Activated CD4-positive, alpha-beta T cell treated with anti-CD3 and anti-CD28 coated beads for 36 hours (primary cell): ENCODE measurements at regions of chr2 and their contacts with region 1.

Region 1: DNA sequence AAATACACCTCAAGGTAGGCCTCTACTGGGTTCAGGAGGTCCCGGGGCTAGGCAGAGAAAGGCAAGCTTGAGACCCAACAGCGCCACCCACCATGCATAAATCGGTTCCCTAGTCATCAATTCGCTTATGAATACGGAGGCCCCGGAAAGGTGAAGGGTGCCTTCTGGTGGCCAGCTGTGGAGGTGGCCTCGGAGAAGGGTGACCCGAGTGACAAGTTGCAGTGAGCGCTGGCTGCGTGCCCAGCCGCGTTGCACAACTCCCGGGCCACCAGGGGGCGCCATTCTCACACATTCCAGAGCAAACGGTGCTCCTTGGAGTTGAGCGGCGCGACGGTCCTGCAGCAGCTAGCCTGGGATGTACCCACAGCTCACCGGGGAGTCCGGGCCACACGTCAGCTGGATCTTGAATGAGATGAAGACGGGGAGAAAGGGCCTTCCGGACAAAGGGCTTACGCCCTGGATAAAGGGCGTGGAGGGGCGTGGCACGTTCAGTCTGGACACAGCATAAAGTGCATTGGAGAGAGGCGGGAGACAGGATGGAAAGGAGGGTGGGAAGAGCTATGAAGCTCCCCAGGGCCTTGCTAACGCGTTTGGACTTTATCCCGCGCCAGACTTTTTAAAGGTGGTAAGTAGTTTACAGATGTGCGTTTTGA is 20.4 kb downstream of the TMSB10 start:
- DNase-seq: peak; percentile 100
- ATAC-seq: peak; percentile 83
- H3K4me3 Mint-ChIP-seq: peak overlapping the region; percentile 87
- H3K27ac Mint-ChIP-seq: peak overlapping the region; percentile 92
- H3K4me1 Mint-ChIP-seq: peaks cover 35% of the 10 kb centered on the region
- H3K27me3 Mint-ChIP-seq: no peaks in the 10 kb centered on the region

Region 2: GRCh38 chr2:84459018-84459943 is 466.6 kb before region 1 on chr2 and contains the start of gene SUCLG1:
- CTCF ChIA-PET with region 1: interaction called, 4 read pairs
- POLR2A ChIA-PET with region 1: no interaction called
- intact Hi-C with region 1: loop called in 1 of 2 experiments (anchors 2 kb)
- DNase-seq: peak; percentile 92
- ATAC-seq: peak; percentile 93
- H3K4me3 Mint-ChIP-seq: peak within 1 kb of the TSS; percentile 94
- H3K27ac Mint-ChIP-seq: peak within 1 kb of the TSS; percentile 98
- H3K4me1 Mint-ChIP-seq: peaks cover 34% of the 10 kb centered on the region
- H3K27me3 Mint-ChIP-seq: no peaks in the 10 kb centered on the region
- total RNA-seq, gene SUCLG1: 60.7 to 68.9 TPM

Region 3: GRCh38 chr2:84741296-84741765 is 184.5 kb before region 1 on chr2:
- CTCF ChIA-PET with region 1: interaction called, 9 read pairs
- POLR2A ChIA-PET with region 1: no interaction called
- intact Hi-C with region 1: loop called in 1 of 2 experiments (anchors 5 kb)
- DNase-seq: peak; percentile 70
- ATAC-seq: peak; percentile 100
- H3K4me3 Mint-ChIP-seq: no peak overlapping the region
- H3K27ac Mint-ChIP-seq: no peak overlapping the region
- H3K4me1 Mint-ChIP-seq: peaks cover 11% of the 10 kb centered on the region
- H3K27me3 Mint-ChIP-seq: no peaks in the 10 kb centered on the region

Region 4: GRCh38 chr2:84888401-84889276 is 37.2 kb before region 1 on chr2:
- CTCF ChIA-PET with region 1: interaction called, 45 read pairs
- POLR2A ChIA-PET with region 1: interaction called, 3 read pairs
- intact Hi-C with region 1: no loop called
- DNase-seq: peak; percentile 71
- ATAC-seq: peak; percentile 87
- H3K4me3 Mint-ChIP-seq: peak overlapping the region; percentile 67
- H3K27ac Mint-ChIP-seq: peak overlapping the region; percentile 96
- H3K4me1 Mint-ChIP-seq: peaks cover 58% of the 10 kb centered on the region
- H3K27me3 Mint-ChIP-seq: no peaks in the 10 kb centered on the region

Region 5: GRCh38 chr2:84946204-84947009 is 20.6 kb after region 1 on chr2:
- CTCF ChIA-PET with region 1: interaction called, 54 read pairs
- POLR2A ChIA-PET with region 1: interaction called, 4 read pairs
- intact Hi-C with region 1: loop called in 1 of 2 experiments (anchors 1 kb)
- DNase-seq: peak; percentile 92
- ATAC-seq: peak; percentile 85
- H3K4me3 Mint-ChIP-seq: peak overlapping the region; percentile 67
- H3K27ac Mint-ChIP-seq: peak overlapping the region; percentile 99
- H3K4me1 Mint-ChIP-seq: peaks cover 49% of the 10 kb centered on the region
- H3K27me3 Mint-ChIP-seq: no peaks in the 10 kb centered on the region

Region 6: DNA sequence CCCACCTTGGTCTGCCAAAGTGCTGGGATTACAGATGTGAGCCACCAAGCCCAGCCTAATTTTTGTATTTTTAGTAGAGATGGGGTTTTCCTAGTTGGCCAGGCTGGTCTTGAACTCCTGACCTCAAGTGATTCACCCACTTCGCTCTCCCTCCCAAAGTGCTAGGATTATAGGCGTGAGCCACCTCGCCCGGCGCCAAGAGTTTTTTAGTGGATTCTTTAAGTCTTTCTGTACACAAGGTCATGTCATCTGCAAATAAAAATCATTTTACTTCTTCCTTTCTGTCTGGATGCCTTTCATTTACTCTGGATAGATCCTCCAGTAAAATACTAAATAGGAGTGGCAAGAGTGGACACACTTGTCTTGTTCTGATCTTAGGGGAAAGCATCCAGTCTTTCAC is 106.8 kb after region 1 on chr2:
- CTCF ChIA-PET with region 1: interaction called, 5 read pairs
- POLR2A ChIA-PET with region 1: interaction called, 12 read pairs
- intact Hi-C with region 1: no loop called
- DNase-seq: no peak
- ATAC-seq: no peak
- H3K4me3 Mint-ChIP-seq: no peak overlapping the region
- H3K27ac Mint-ChIP-seq: no peak overlapping the region
- H3K4me1 Mint-ChIP-seq: peaks cover 5% of the 10 kb centered on the region
- H3K27me3 Mint-ChIP-seq: no peaks in the 10 kb centered on the region

Region 7: DNA sequence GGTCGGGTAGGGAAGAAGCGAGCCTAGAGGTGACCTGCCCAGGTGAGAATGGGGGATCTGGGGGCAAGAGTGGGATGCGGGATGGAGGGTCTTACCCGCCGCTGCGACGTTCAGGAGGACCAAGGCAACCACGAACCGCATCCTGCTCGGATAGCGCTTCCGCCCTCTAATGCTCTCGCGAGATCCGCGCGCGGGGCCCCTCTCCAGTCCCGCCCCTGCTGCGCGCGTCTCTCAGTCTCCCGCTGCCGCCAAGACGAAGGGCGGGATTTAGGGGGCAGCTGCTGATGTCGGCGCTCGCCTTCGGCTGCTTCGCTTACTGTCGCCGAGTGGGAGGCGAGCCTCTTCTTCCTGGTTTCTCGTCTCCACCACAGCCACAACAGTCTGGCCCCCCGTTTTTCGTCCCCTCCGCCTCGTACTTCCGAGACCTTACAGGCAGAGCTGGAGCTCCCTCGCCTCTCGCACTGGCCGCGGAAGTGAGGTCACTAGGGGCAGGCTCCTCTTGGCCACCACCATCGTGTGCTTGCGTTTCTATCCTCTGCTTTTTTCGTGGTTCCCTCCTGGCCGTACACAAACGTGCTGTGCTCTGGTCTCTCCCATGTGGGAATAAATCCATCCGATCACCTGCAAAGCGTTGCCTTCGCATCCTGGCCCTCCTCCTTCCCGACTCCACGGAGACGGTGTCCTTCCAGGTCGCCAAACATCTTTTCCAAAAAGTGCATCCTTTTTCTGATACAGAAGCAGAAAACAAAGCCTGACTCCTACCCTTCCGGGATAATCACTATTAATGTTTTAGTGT is 402.2 kb after region 1 on chr2 and contains the start of gene TGOLN2:
- CTCF ChIA-PET with region 1: no interaction called
- POLR2A ChIA-PET with region 1: no interaction called
- intact Hi-C with region 1: loop called in 1 of 2 experiments (anchors 5 kb)
- DNase-seq: peak; percentile 98
- ATAC-seq: peak; percentile 91
- H3K4me3 Mint-ChIP-seq: peak within 1 kb of the TSS; percentile 86
- H3K27ac Mint-ChIP-seq: peak within 1 kb of the TSS; percentile 99
- H3K4me1 Mint-ChIP-seq: peaks cover 37% of the 10 kb centered on the region
- H3K27me3 Mint-ChIP-seq: no peaks in the 10 kb centered on the region
- total RNA-seq, gene TGOLN2: 84.0 to 90.4 TPM